Breast epithelium (tissue), 4 donors: ENCODE measurements at regions of chr12 and their contacts with region 1.

Region 1: DNA sequence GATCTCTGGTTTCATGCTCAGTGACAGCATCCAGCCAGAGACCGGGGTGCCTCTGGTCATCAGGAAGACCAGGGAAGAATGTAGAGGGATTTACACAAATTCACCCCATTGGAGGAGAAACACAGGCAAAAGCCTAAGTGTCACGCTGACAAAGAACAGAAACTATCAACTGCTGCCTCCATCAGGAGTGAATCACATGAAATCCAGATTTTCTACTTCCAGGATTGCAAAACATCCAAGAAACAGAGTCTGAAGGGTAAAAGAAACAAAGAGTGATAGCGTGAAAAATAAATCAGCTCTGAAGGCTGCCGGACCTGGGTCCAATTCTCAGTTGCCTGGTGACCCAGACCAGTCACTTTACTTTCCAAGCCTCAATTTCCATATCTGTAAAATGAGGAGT is 136.1 kb upstream of the MAP1LC3B2 start:
- DNase-seq: no peak
- H3K4me3 ChIP-seq: no peak overlapping the region
- H3K27ac ChIP-seq: peak overlapping the region in 1 of 2 donors; percentile 28
- H3K4me1 ChIP-seq: no peaks in the 10 kb centered on the region
- H3K27me3 ChIP-seq: no peaks in the 10 kb centered on the region
- CTCF ChIP-seq: no peak
- POLR2A ChIP-seq: no peak

Region 2: GRCh38 chr12:116441292-116441691 is 18.2 kb after region 1 on chr12:
- intact Hi-C with region 1: loop called (anchors 1 kb)
- DNase-seq: no peak
- H3K4me3 ChIP-seq: no peak overlapping the region
- H3K27ac ChIP-seq: no peak overlapping the region
- H3K4me1 ChIP-seq: no peaks in the 10 kb centered on the region
- H3K27me3 ChIP-seq: no peaks in the 10 kb centered on the region
- CTCF ChIP-seq: no peak
- POLR2A ChIP-seq: no peak